ENCODE measurements at regions of chr4 and their contacts with region 1.

Region 1: GRCh38 chr4:48681856-48682255 is 98.2 kb downstream of the FRYL start:
- DNase-seq: peak; percentile 28
- ATAC-seq: no peak
- H3K4me3 Mint-ChIP-seq: no peak overlapping the region
- H3K27ac Mint-ChIP-seq: no peak overlapping the region
- H3K4me1 Mint-ChIP-seq: peaks cover 19% of the 10 kb centered on the region
- H3K27me3 Mint-ChIP-seq: no peaks in the 10 kb centered on the region

Region 2: GRCh38 chr4:48578132-48578968 is 103.5 kb before region 1 on chr4:
- CTCF ChIA-PET with region 1: interaction called, 22 read pairs
- POLR2A ChIA-PET with region 1: no interaction called
- DNase-seq: peak; percentile 62
- ATAC-seq: peak; percentile 76
- H3K4me3 Mint-ChIP-seq: no peak overlapping the region
- H3K27ac Mint-ChIP-seq: no peak overlapping the region
- H3K4me1 Mint-ChIP-seq: no peaks in the 10 kb centered on the region
- H3K27me3 Mint-ChIP-seq: no peaks in the 10 kb centered on the region

Measured in activated CD8-positive, alpha-beta T cell treated with anti-CD3 and anti-CD28 coated beads, Interleukin-2, amount 10 ng/mL, durations not matched to agents 7 days and 5 days (primary cell).